Prostate gland (tissue), 2 donors: ENCODE measurements at regions of chr15 and their contacts with region 1.

Region 1: GRCh38 chr15:64046347-64047153 is at the start of gene DAPK2:
- DNase-seq: peak; percentile 51
- H3K4me3 ChIP-seq: peak within 1 kb of the TSS; percentile 50 to 63
- H3K27ac ChIP-seq: peak within 1 kb of the TSS; percentile 4 to 26
- H3K4me1 ChIP-seq: no peaks in the 10 kb centered on the region
- H3K27me3 ChIP-seq: no peaks in the 10 kb centered on the region
- CTCF ChIP-seq: peak; percentile 69 to 92 (median 80)
- POLR2A ChIP-seq: no peak
- total RNA-seq, gene DAPK2: 13.8 to 40.4 TPM

Region 2: GRCh38 chr15:63922261-63922904 is 124.2 kb before region 1 on chr15:
- intact Hi-C with region 1: no loop called
- DNase-seq: no peak
- H3K4me3 ChIP-seq: no peak overlapping the region
- H3K27ac ChIP-seq: no peak overlapping the region
- H3K4me1 ChIP-seq: peaks cover 5% of the 10 kb centered on the region
- H3K27me3 ChIP-seq: no peaks in the 10 kb centered on the region
- CTCF ChIP-seq: no peak
- POLR2A ChIP-seq: no peak

Region 3: DNA sequence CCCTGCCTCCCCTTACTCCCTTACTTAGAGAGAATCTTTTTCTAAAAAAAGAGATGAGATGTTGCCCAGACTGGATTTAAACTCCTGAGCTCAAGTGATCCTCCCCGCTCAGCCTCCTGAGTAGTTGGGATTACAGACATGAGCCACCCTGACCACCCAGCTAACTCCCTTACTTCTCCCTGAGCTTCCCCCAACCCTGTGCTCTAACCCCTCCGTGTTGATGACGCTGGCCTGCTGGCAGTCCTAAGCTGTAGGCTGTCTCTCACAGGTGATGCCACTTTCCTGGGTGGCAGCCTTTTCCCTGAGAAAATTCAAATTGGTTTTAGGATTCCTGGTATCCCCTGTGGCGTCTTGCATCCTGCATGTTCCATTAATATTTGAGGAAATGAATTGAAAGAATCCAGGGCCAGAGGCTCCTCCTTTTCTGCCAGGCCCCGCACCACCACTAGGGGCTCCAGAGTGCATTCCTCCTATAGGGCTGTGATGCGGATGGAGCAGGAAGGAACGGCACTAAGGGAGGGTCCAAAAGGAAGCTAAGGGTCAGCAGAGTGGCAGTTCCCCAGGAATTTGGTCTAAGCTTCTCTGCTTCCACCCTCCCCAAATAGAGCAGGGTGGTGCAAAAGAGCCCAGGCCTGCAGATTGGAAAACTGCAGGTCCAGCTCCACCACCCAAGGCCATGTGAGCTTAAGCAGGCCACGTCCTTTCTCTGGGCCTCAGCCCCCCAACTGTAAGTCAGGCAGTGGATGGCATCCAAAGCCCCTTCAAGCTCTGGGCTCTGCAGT is 101.4 kb before region 1 on chr15:
- intact Hi-C with region 1: loop called (anchors 10 kb)
- DNase-seq: peak; percentile 53
- H3K4me3 ChIP-seq: no peak overlapping the region
- H3K27ac ChIP-seq: no peak overlapping the region
- H3K4me1 ChIP-seq: no peaks in the 10 kb centered on the region
- H3K27me3 ChIP-seq: no peaks in the 10 kb centered on the region
- CTCF ChIP-seq: peak; percentile 57 to 88 (median 72)
- POLR2A ChIP-seq: no peak

Region 4: GRCh38 chr15:64256051-64256450 is 209.5 kb after region 1 on chr15:
- intact Hi-C with region 1: no loop called
- DNase-seq: no peak
- H3K4me3 ChIP-seq: no peak overlapping the region
- H3K27ac ChIP-seq: no peak overlapping the region
- H3K4me1 ChIP-seq: no peaks in the 10 kb centered on the region
- H3K27me3 ChIP-seq: no peaks in the 10 kb centered on the region
- CTCF ChIP-seq: no peak
- POLR2A ChIP-seq: no peak